ENCODE measurements at regions of chr9 and their contacts with region 1.

Region 1: DNA sequence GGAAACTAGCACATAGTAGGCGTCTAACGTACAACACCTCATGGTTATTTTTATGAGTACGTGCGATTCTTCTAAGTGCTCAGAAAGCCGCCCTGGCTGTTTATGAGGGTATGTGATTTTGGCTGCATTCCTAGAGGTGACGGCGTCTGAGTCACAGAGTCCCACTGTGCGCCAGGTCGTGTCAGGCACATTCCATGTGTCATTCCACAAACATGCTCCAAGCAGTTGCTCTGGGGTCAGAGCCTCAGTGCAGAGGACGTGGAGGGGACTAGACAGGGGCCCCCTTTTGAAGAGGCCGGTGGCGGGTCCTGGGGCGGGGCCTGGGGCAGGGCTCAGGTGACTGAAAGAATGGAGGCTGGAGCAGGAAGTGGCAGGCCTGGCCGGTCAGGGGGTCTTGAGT is 51.9 kb downstream of the NEK6 start:
- DNase-seq: no peak

Region 2: GRCh38 chr9:124285903-124286291 is 23.8 kb before region 1 on chr9:
- intact Hi-C with region 1: loop called in 1 of 2 experiments (anchors 2 kb)
- DNase-seq: peak; percentile 94

Region 3: DNA sequence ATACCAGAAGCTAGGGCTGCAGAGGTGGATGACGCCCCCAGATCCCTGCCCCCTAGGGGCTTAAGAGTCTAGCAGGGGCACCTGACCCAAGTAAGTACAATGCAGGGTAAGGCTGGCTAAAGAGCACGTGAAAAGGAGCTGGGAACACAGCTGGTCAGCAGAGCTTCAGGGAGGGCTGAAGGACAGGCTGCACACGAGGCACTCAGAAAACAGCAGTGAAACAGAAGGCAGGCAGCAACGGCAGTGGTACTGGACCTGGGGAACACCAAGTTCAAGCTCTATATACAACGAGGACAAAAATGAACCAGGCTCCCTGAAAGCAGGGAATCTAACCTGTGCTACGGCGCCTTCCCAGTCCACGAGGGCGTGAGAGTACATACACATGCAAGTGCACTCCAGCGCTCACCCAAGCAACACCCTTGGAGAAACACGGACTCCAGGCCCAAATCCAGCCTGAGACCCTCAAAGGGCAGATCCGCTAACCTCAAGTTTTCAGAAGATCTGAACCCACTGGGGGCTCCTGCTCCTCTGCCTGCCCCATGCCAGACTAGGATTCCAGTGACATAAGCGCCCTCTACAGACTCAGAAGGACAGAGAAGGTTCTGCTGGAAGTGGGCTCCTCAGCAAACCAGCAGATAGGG is 48.2 kb after region 1 on chr9:
- intact Hi-C with region 1: no loop called
- DNase-seq: peak; percentile 66